Endothelial cell of umbilical vein (primary cell): ENCODE measurements at regions of chr3 and their contacts with region 1.

Region 1: GRCh38 chr3:45137656-45138181 is 8.5 kb downstream of the CDCP1 start:
- DNase-seq: no peak
- H3K4me3 ChIP-seq: no peak overlapping the region
- H3K27ac ChIP-seq: no peak overlapping the region
- H3K4me1 ChIP-seq: no peaks in the 10 kb centered on the region
- H3K27me3 ChIP-seq: no peaks in the 10 kb centered on the region
- CTCF ChIP-seq: no peak
- POLR2A ChIP-seq: no peak

Region 2: GRCh38 chr3:45064512-45065372 is 73.0 kb before region 1 on chr3:
- CTCF ChIA-PET with region 1: no interaction called
- POLR2A ChIA-PET with region 1: no interaction called
- dilution Hi-C with region 1: no loop called
- intact Hi-C with region 1: loop called (anchors 1 kb)
- DNase-seq: peak; percentile 81
- H3K4me3 ChIP-seq: peak overlapping the region in 1 of 3 experiments; percentile 13
- H3K27ac ChIP-seq: peak overlapping the region; percentile 64
- H3K4me1 ChIP-seq: peaks cover 16% of the 10 kb centered on the region
- H3K27me3 ChIP-seq: no peaks in the 10 kb centered on the region
- CTCF ChIP-seq: no peak
- POLR2A ChIP-seq: no peak

Region 3: GRCh38 chr3:45123030-45123429 is 14.7 kb before region 1 on chr3:
- CTCF ChIA-PET with region 1: interaction called, 11 read pairs
- POLR2A ChIA-PET with region 1: no interaction called
- dilution Hi-C with region 1: no loop called
- intact Hi-C with region 1: no loop called
- DNase-seq: peak; percentile 12
- H3K4me3 ChIP-seq: no peak overlapping the region
- H3K27ac ChIP-seq: peak overlapping the region; percentile 26
- H3K4me1 ChIP-seq: peaks cover 14% of the 10 kb centered on the region
- H3K27me3 ChIP-seq: no peaks in the 10 kb centered on the region
- CTCF ChIP-seq: no peak
- POLR2A ChIP-seq: no peak